SK-N-SH (cell line): ENCODE measurements at regions of chr14 and their contacts with region 1.

Region 1: GRCh38 chr14:33792720-33793368 is 158.0 kb downstream of the EGLN3 start:
- DNase-seq: peak; percentile 84
- H3K4me3 ChIP-seq: peak overlapping the region; percentile 7 to 25; a peak in 1 of 4 replicates
- H3K27ac ChIP-seq: peak overlapping the region in 1 of 2 experiments; percentile 15; a peak in 1 of 4 replicates
- H3K4me1 ChIP-seq: peaks cover 7 to 18% of the 10 kb centered on the region in 2 experiments; a peak in 3 of 4 replicates
- H3K27me3 ChIP-seq: no peaks in the 10 kb centered on the region
- CTCF ChIP-seq: peak; percentile 97
- EP300 ChIP-seq: peak; percentile 61 to 69; a peak in 3 of 4 replicates
- RAD21 ChIP-seq: peak; percentile 97

Region 2: DNA sequence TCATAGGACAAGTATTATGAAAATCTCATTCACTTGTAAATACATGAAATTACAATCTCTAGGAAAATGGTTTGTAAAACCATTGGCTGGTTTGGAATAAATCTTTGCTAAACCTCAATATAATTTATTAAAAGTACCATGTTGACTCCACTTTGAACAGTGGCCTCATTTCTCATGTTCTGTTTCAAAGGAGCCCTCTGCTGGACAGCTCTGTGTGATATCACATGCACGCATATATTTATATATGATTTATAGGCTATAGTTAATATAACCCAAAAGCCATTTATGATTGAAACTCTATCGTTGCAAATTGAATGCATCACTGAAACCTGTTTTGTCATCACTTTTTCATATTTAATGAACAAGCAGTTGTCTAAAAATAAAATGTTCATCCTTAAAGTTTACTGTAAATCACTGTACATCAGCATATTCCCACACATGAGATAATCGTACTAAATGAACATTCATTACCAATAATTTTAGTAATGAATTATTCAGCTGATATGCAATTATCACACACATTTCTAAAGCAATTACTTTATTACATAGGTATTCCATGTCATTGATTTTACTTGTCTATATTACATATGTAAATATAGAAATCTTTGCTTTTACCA is 360.3 kb before region 1 on chr14:
- CTCF ChIA-PET with region 1: interaction called, 13 read pairs
- POLR2A ChIA-PET with region 1: no interaction called
- DNase-seq: no peak
- H3K4me3 ChIP-seq: no peak overlapping the region
- H3K27ac ChIP-seq: no peak overlapping the region
- H3K4me1 ChIP-seq: peaks cover 0 to 7% of the 10 kb centered on the region in 2 experiments; a peak in 3 of 4 replicates
- H3K27me3 ChIP-seq: no peaks in the 10 kb centered on the region
- CTCF ChIP-seq: peak; percentile 77
- EP300 ChIP-seq: no peak
- RAD21 ChIP-seq: peak; percentile 80

Region 3: GRCh38 chr14:33475623-33476022 is 317.2 kb before region 1 on chr14:
- CTCF ChIA-PET with region 1: interaction called, 143 read pairs
- POLR2A ChIA-PET with region 1: no interaction called
- DNase-seq: peak; percentile 56
- H3K4me3 ChIP-seq: no peak overlapping the region
- H3K27ac ChIP-seq: peak overlapping the region; percentile 31 to 55; a peak in 2 of 4 replicates
- H3K4me1 ChIP-seq: peaks cover 11 to 16% of the 10 kb centered on the region in 2 experiments; a peak in 3 of 4 replicates
- H3K27me3 ChIP-seq: no peaks in the 10 kb centered on the region
- CTCF ChIP-seq: peak; percentile 67
- EP300 ChIP-seq: no peak
- RAD21 ChIP-seq: peak; percentile 80

Region 4: GRCh38 chr14:33764876-33765650 is 27.8 kb before region 1 on chr14:
- CTCF ChIA-PET with region 1: interaction called, 11 read pairs
- POLR2A ChIA-PET with region 1: no interaction called
- DNase-seq: peak; percentile 75
- H3K4me3 ChIP-seq: no peak overlapping the region
- H3K27ac ChIP-seq: peak overlapping the region; percentile 13 to 76; a peak in 3 of 4 replicates
- H3K4me1 ChIP-seq: peaks cover 9 to 53% of the 10 kb centered on the region in 2 experiments
- H3K27me3 ChIP-seq: no peaks in the 10 kb centered on the region
- CTCF ChIP-seq: no peak
- EP300 ChIP-seq: peak; percentile 33 to 40; a peak in 2 of 4 replicates
- RAD21 ChIP-seq: peak; percentile 41

Region 5: GRCh38 chr14:33781265-33781664 is 11.6 kb before region 1 on chr14:
- CTCF ChIA-PET with region 1: interaction called, 28 read pairs
- POLR2A ChIA-PET with region 1: no interaction called
- DNase-seq: no peak
- H3K4me3 ChIP-seq: no peak overlapping the region
- H3K27ac ChIP-seq: no peak overlapping the region
- H3K4me1 ChIP-seq: peaks cover 0 to 19% of the 10 kb centered on the region in 2 experiments; a peak in 3 of 4 replicates
- H3K27me3 ChIP-seq: no peaks in the 10 kb centered on the region
- CTCF ChIP-seq: no peak
- EP300 ChIP-seq: no peak
- RAD21 ChIP-seq: no peak

Region 6: GRCh38 chr14:33871394-33871793 is 78.5 kb after region 1 on chr14:
- CTCF ChIA-PET with region 1: no interaction called
- POLR2A ChIA-PET with region 1: no interaction called
- DNase-seq: no peak
- H3K4me3 ChIP-seq: no peak overlapping the region
- H3K27ac ChIP-seq: no peak overlapping the region
- H3K4me1 ChIP-seq: no peaks in the 10 kb centered on the region
- H3K27me3 ChIP-seq: no peaks in the 10 kb centered on the region
- CTCF ChIP-seq: no peak
- EP300 ChIP-seq: no peak
- RAD21 ChIP-seq: no peak

Region 7: GRCh38 chr14:34030864-34031263 is 238.0 kb after region 1 on chr14:
- CTCF ChIA-PET with region 1: no interaction called
- POLR2A ChIA-PET with region 1: no interaction called
- DNase-seq: peak; percentile 29
- H3K4me3 ChIP-seq: no peak overlapping the region
- H3K27ac ChIP-seq: no peak overlapping the region
- H3K4me1 ChIP-seq: peaks cover 0 to 17% of the 10 kb centered on the region in 2 experiments; a peak in 1 of 4 replicates
- H3K27me3 ChIP-seq: no peaks in the 10 kb centered on the region; the same call in 1 of the 2 replicates
- CTCF ChIP-seq: no peak
- EP300 ChIP-seq: no peak
- RAD21 ChIP-seq: no peak

Region 8: GRCh38 chr14:34098045-34098984 is 305.5 kb after region 1 on chr14:
- CTCF ChIA-PET with region 1: interaction called, 25 read pairs
- POLR2A ChIA-PET with region 1: no interaction called
- DNase-seq: peak; percentile 70
- H3K4me3 ChIP-seq: no peak overlapping the region
- H3K27ac ChIP-seq: no peak overlapping the region
- H3K4me1 ChIP-seq: peaks cover 0 to 3% of the 10 kb centered on the region in 2 experiments; a peak in 1 of 4 replicates
- H3K27me3 ChIP-seq: no peaks in the 10 kb centered on the region; the same call in 1 of the 2 replicates
- CTCF ChIP-seq: peak; percentile 72
- EP300 ChIP-seq: no peak
- RAD21 ChIP-seq: peak; percentile 90